Psoas muscle (tissue), 8 donors: ENCODE measurements at regions of chr12 and their contacts with region 1.

Region 1: GRCh38 chr12:124767066-124767821 is 96.4 kb downstream of the SCARB1 start:
- DNase-seq: peak; percentile 81 to 88
- ATAC-seq: peak; percentile 72 to 85 (median 76)
- H3K4me3 ChIP-seq: no peak overlapping the region
- H3K27ac ChIP-seq: peak overlapping the region; percentile 86
- H3K4me1 ChIP-seq: peaks cover 33% of the 10 kb centered on the region
- H3K27me3 ChIP-seq: no peaks in the 10 kb centered on the region
- CTCF ChIP-seq: peak; percentile 100

Region 2: GRCh38 chr12:124036674-124037109 is 730.6 kb before region 1 on chr12:
- intact Hi-C with region 1: loop called (anchors 2 to 5 kb)
- DNase-seq: peak in 1 of 2 donors; percentile 36
- ATAC-seq: peak; percentile 30 to 75 (median 58)
- H3K4me3 ChIP-seq: no peak overlapping the region
- H3K27ac ChIP-seq: no peak overlapping the region
- H3K4me1 ChIP-seq: peaks cover 3% of the 10 kb centered on the region
- H3K27me3 ChIP-seq: no peaks in the 10 kb centered on the region
- CTCF ChIP-seq: peak; percentile 95

Region 3: GRCh38 chr12:124347716-124348357 is 419.4 kb before region 1 on chr12:
- intact Hi-C with region 1: loop called (anchors 5 kb)
- DNase-seq: no peak
- ATAC-seq: peak; percentile 36 to 54 (median 52)
- H3K4me3 ChIP-seq: no peak overlapping the region
- H3K27ac ChIP-seq: no peak overlapping the region
- H3K4me1 ChIP-seq: peaks cover 8% of the 10 kb centered on the region
- H3K27me3 ChIP-seq: no peaks in the 10 kb centered on the region
- CTCF ChIP-seq: peak; percentile 54

Region 4: GRCh38 chr12:124453419-124454351 is 313.6 kb before region 1 on chr12:
- intact Hi-C with region 1: loop called in 1 of 2 experiments (anchors 10 kb)
- DNase-seq: peak; percentile 93 to 97
- ATAC-seq: peak; percentile 82 to 86 (median 82)
- H3K4me3 ChIP-seq: peak overlapping the region; percentile 40
- H3K27ac ChIP-seq: peak overlapping the region; percentile 87
- H3K4me1 ChIP-seq: peaks cover 52% of the 10 kb centered on the region
- H3K27me3 ChIP-seq: no peaks in the 10 kb centered on the region
- CTCF ChIP-seq: no peak

Region 5: DNA sequence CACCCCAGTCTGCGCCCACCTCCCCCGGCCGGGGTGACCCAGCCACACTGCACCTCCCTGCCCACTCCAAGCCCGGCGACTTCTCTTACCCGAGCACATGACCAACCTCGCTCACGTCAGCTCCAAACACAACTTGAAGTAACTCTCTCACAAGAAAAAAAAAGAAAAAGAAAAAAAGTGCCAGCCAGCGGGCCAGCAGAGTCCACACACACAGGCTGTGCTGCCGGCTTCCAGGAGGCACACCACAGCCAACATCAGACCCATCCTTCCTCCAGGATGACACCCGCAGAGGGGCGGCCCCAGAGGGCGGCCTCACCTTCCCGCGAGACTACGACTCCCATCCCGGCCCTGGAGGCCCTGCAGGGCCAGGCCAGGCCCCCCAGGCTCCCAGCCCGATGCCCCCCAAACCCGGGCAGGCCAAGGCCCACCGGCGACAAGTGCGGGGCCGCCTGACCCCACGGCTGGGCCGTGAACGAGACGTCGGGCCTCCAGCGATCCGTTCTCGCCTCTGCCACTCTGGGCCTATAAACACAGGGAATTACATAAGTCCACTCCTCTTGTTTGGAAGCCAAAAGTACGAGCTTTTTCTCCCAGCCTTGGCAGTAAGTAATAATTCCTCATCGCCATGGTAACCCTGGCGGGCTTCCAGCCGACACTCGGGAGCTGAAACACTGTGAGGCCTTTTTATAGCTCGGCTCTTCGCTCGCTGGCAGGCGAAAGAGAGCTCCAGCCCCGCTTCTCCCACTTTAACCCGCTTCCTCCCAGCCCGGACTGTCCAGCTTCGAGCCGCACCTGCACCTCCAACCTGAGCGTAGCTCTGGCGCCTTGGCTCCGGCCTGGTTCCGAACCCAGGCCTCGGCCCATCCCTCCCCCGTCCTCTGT is 249.0 kb before region 1 on chr12:
- intact Hi-C with region 1: loop called (anchors 5 kb)
- DNase-seq: peak; percentile 98 to 99
- ATAC-seq: peak; percentile 70 to 74 (median 71)
- H3K4me3 ChIP-seq: peak overlapping the region; percentile 79
- H3K27ac ChIP-seq: peak overlapping the region; percentile 97
- H3K4me1 ChIP-seq: peaks cover 77% of the 10 kb centered on the region
- H3K27me3 ChIP-seq: no peaks in the 10 kb centered on the region
- CTCF ChIP-seq: no peak

Region 6: DNA sequence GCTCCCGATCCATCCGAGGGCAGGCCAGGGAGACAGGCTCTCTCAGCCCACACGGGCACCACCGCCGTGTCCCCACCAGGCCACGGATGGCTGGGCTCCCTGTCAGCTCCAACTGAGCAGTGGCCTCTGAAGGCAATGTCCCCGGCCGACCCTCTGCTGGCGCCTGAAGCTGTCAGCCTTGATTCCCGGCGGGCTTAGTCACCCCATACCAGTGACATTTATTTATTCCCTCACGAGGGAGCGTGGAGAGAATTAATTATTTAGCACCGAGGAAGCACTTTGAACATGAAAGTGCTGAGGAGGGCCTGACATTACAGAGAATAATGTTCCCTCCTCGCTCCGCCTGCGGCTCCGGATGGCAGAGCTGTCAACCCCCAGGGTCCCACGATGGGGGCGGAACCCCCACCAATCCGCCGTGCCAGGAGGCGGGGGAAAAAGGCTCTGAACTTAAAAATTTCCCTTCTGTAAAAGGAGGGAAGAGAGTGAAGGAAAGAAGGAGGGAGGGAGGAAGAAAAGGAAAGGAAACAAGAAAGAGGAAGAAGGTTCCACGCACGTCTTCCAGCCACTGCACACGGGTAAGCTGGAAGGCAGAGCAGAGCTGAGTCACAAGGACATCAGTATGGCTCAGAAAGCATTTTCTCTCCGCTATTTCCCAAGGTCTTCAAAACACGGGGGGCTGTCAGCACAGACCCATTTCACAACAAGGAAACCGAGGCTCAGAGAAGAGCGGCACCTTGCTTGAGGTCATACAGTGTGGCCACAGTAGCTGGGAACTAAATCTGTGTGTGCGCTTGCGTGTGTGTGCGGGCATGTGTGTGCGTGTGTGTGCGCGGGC is 91.1 kb before region 1 on chr12:
- intact Hi-C with region 1: loop called in 1 of 2 experiments (anchors 5 kb)
- DNase-seq: peak; percentile 44 to 80
- ATAC-seq: peak; percentile 54 to 84 (median 76)
- H3K4me3 ChIP-seq: peak overlapping the region; percentile 49
- H3K27ac ChIP-seq: peak overlapping the region; percentile 69
- H3K4me1 ChIP-seq: peaks cover 29% of the 10 kb centered on the region
- H3K27me3 ChIP-seq: no peaks in the 10 kb centered on the region
- CTCF ChIP-seq: no peak

Region 7: GRCh38 chr12:124713436-124714082 is 53.7 kb before region 1 on chr12:
- intact Hi-C with region 1: no loop called
- DNase-seq: no peak
- ATAC-seq: peak in 3 of 4 donors; percentile 17 to 46 (median 42)
- H3K4me3 ChIP-seq: peak overlapping the region; percentile 40
- H3K27ac ChIP-seq: peak overlapping the region; percentile 80
- H3K4me1 ChIP-seq: peaks cover 10% of the 10 kb centered on the region
- H3K27me3 ChIP-seq: no peaks in the 10 kb centered on the region
- CTCF ChIP-seq: no peak

Region 8: DNA sequence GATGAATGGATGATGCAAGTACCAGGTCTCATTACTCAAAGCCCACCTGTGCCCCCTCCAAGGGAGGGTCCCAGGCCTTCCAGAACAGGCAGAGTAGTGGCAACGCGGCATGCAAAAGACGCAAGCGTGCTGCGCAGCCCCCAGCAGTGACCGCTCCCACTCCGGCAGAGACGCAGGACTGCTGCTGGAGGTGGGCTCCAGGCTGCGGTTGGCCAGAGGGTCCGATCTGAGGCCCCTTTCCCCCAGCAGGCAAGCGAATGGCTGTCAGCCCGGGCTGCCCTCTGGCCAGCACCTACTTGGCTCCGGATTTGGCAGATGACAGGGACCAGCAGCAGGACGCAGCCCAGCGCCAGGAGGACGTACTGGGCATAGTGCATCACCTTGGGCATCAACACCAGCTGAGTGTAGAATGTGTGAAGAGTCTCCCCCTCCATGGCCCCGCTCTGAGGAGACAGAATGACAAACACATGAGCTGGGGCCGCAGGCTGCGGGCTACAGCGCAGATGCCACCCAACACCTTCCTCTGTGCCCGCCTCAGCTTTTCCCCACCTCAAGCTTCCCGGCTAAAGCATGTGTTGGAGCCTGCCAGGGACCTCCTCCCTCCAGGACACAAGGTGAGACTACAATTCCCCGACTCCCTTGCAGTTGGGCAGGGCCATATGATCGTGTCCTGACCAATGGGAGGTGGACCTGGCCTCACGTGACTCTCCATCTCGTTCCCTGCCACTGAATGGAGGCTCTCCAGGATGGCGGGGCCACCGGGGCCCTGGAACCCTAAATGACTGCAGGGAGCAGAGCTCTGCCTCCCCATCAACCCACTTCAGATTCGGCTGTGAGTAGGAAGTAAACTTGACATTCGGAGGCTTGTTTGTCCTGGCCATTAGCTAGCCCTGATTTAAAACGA is 19.1 kb after region 1 on chr12:
- intact Hi-C with region 1: no loop called
- DNase-seq: peak; percentile 80 to 81
- ATAC-seq: peak; percentile 95 to 98 (median 96)
- H3K4me3 ChIP-seq: peak overlapping the region; percentile 49
- H3K27ac ChIP-seq: no peak overlapping the region
- H3K4me1 ChIP-seq: peaks cover 8% of the 10 kb centered on the region
- H3K27me3 ChIP-seq: no peaks in the 10 kb centered on the region
- CTCF ChIP-seq: no peak

Region 9: GRCh38 chr12:124964836-124965462 is 197.7 kb after region 1 on chr12:
- intact Hi-C with region 1: no loop called
- DNase-seq: no peak
- ATAC-seq: no peak
- H3K4me3 ChIP-seq: no peak overlapping the region
- H3K27ac ChIP-seq: no peak overlapping the region
- H3K4me1 ChIP-seq: no peaks in the 10 kb centered on the region
- H3K27me3 ChIP-seq: no peaks in the 10 kb centered on the region
- CTCF ChIP-seq: no peak

Region 10: GRCh38 chr12:125110641-125111360 is 343.6 kb after region 1 on chr12:
- intact Hi-C with region 1: no loop called
- DNase-seq: no peak
- ATAC-seq: no peak
- H3K4me3 ChIP-seq: no peak overlapping the region
- H3K27ac ChIP-seq: no peak overlapping the region
- H3K4me1 ChIP-seq: no peaks in the 10 kb centered on the region
- H3K27me3 ChIP-seq: no peaks in the 10 kb centered on the region
- CTCF ChIP-seq: no peak